Right ventricle myocardium superior (tissue), 1 donor: ENCODE measurements at regions of chr5 and their contacts with region 1.

Region 1: GRCh38 chr5:96743065-96743768 is 64.5 kb downstream of the ERAP1 start:
- DNase-seq: no peak
- ATAC-seq: peak; percentile 39

Region 2: DNA sequence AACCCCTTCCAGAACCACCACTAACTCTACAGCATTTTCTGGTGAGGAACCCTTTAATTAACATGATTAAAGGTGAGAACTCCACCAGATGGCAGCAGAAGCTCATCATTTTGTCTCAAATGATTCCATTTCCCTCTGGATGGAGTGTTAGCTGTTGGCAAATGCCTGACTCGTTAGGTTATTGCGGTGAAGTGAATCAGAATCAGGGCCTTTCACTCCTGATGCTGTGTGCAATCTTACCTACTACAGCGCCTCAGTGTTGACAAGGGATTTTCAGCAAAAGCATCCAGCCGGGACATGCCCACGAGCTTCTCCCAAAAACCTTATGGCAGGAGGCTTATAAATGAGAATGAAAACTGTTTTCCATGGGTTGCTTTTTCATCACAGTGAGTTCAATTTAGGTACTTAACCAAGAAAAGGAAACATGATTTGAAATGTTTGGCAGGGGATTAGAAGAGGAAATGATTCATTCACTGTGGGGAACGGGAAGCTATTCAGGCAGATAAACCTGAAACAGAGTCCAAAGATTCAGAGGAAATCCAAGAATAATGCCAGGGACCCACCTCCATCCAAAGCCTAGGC is 129.0 kb before region 1 on chr5:
- intact Hi-C with region 1: loop called (anchors 10 kb)
- DNase-seq: no peak
- ATAC-seq: peak; percentile 86

Region 3: GRCh38 chr5:96709152-96709821 is 33.9 kb before region 1 on chr5:
- intact Hi-C with region 1: loop called (anchors 5 kb)
- DNase-seq: no peak
- ATAC-seq: peak; percentile 37